K562 (cell line): ENCODE measurements at regions of chr7 and their contacts with region 1.

Region 1: GRCh38 chr7:116984917-116985316 is 31.6 kb downstream of the ST7 start:
- DNase-seq: peak; percentile 58 to 69 (median 66)
- ATAC-seq: peak; percentile 83
- H3K4me3 ChIP-seq: no peak overlapping the region
- H3K27ac ChIP-seq: no peak overlapping the region
- H3K4me1 ChIP-seq: no peaks in the 10 kb centered on the region; a peak in 1 of 5 replicates
- H3K27me3 ChIP-seq: no peaks in the 10 kb centered on the region
- CTCF ChIP-seq: peak; percentile 67 to 86 (median 71)
- EP300 ChIP-seq: no peak
- POLR2A ChIP-seq: no peak
- RAD21 ChIP-seq: peak; percentile 86 to 90

Region 2: GRCh38 chr7:116872026-116872425 is 112.9 kb before region 1 on chr7:
- CTCF ChIA-PET with region 1: no interaction called
- POLR2A ChIA-PET with region 1: no interaction called
- in situ Hi-C with region 1: no loop called
- intact Hi-C with region 1: no loop called
- DNase-seq: no peak
- ATAC-seq: no peak
- H3K4me3 ChIP-seq: no peak overlapping the region
- H3K27ac ChIP-seq: no peak overlapping the region
- H3K4me1 ChIP-seq: peaks cover 22 to 38% of the 10 kb centered on the region in 2 experiments
- H3K27me3 ChIP-seq: no peaks in the 10 kb centered on the region
- CTCF ChIP-seq: no peak
- EP300 ChIP-seq: no peak
- POLR2A ChIP-seq: no peak
- RAD21 ChIP-seq: no peak

Region 3: GRCh38 chr7:116970238-116970910 is 14.5 kb before region 1 on chr7:
- CTCF ChIA-PET with region 1: interaction called, 3 read pairs
- POLR2A ChIA-PET with region 1: interaction called, 10 read pairs
- in situ Hi-C with region 1: no loop called
- intact Hi-C with region 1: no loop called
- DNase-seq: peak in 1 of 4 experiments; percentile 37
- ATAC-seq: peak; percentile 48
- H3K4me3 ChIP-seq: no peak overlapping the region
- H3K27ac ChIP-seq: peak overlapping the region; percentile 50; the same call in 2 of the 3 replicates
- H3K4me1 ChIP-seq: peaks cover 12 to 25% of the 10 kb centered on the region in 2 experiments
- H3K27me3 ChIP-seq: no peaks in the 10 kb centered on the region
- CTCF ChIP-seq: no peak
- EP300 ChIP-seq: no peak
- POLR2A ChIP-seq: no peak
- RAD21 ChIP-seq: no peak

Region 4: GRCh38 chr7:117014673-117015133 is 29.8 kb after region 1 on chr7:
- CTCF ChIA-PET with region 1: interaction called, 10 read pairs
- POLR2A ChIA-PET with region 1: no interaction called
- in situ Hi-C with region 1: no loop called
- intact Hi-C with region 1: loop called (anchors 1 kb)
- DNase-seq: peak; percentile 79 to 97 (median 89)
- ATAC-seq: peak; percentile 88
- H3K4me3 ChIP-seq: peak overlapping the region; percentile 40
- H3K27ac ChIP-seq: peak overlapping the region; percentile 85
- H3K4me1 ChIP-seq: peaks cover 13 to 72% of the 10 kb centered on the region in 2 experiments
- H3K27me3 ChIP-seq: no peaks in the 10 kb centered on the region
- CTCF ChIP-seq: no peak
- EP300 ChIP-seq: peak; percentile 95
- POLR2A ChIP-seq: peak; percentile 81
- RAD21 ChIP-seq: peak in 1 of 2 experiments; percentile 17; a peak in 1 of 4 replicates

Region 5: GRCh38 chr7:117119192-117119924 is 134.4 kb after region 1 on chr7:
- CTCF ChIA-PET with region 1: interaction called, 143 read pairs
- POLR2A ChIA-PET with region 1: interaction called, 3 read pairs
- in situ Hi-C with region 1: no loop called
- intact Hi-C with region 1: loop called (anchors 1 kb)
- DNase-seq: peak; percentile 60 to 94 (median 66)
- ATAC-seq: peak; percentile 82
- H3K4me3 ChIP-seq: no peak overlapping the region
- H3K27ac ChIP-seq: no peak overlapping the region
- H3K4me1 ChIP-seq: peaks cover 0 to 8% of the 10 kb centered on the region in 2 experiments; a peak in 3 of 5 replicates
- H3K27me3 ChIP-seq: no peaks in the 10 kb centered on the region
- CTCF ChIP-seq: peak; percentile 90 to 98 (median 92)
- EP300 ChIP-seq: 0 out of 2 replicates have a peak, but pooled peaks have one; percentile 2
- POLR2A ChIP-seq: no peak
- RAD21 ChIP-seq: peak; percentile 99

Region 6: DNA sequence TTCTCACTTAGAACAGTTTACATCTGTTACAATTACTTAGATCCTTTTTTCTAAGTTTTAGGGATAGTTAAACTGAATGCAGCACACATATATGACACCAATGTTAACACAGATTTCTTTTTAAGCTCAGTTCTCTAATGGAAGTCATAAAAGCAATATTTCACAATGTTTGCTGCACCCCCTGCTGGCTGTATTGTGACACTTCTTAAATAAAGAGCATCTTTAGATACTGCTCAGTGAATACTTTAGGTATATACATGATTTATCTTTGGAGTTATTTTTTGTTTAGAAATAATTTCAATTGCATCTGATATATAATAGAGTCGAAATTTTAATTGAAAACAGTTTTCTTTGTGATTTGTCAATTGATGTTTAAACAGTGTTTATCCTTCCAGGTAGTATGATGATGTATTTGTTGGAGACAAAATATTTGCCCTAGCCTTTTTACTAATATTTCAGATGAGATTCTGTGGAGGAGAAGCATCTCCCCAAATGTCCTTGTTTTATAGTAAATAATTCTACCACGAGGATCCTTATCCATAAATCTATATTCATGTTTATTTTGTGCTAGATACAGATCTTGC is 142.8 kb after region 1 on chr7:
- CTCF ChIA-PET with region 1: interaction called, 143 read pairs
- POLR2A ChIA-PET with region 1: interaction called, 3 read pairs
- in situ Hi-C with region 1: loop called (anchors 5 kb)
- intact Hi-C with region 1: loop called (anchors 1 kb)
- DNase-seq: peak; percentile 34 to 80 (median 55)
- ATAC-seq: peak; percentile 79
- H3K4me3 ChIP-seq: no peak overlapping the region
- H3K27ac ChIP-seq: no peak overlapping the region
- H3K4me1 ChIP-seq: peaks cover 0 to 15% of the 10 kb centered on the region in 2 experiments; a peak in 3 of 5 replicates
- H3K27me3 ChIP-seq: no peaks in the 10 kb centered on the region
- CTCF ChIP-seq: peak; percentile 57 to 90 (median 70); a peak in 5 of 6 replicates
- EP300 ChIP-seq: no peak
- POLR2A ChIP-seq: no peak
- RAD21 ChIP-seq: peak; percentile 82 to 90

Region 7: GRCh38 chr7:117338020-117338419 is 353.1 kb after region 1 on chr7:
- CTCF ChIA-PET with region 1: no interaction called
- POLR2A ChIA-PET with region 1: no interaction called
- in situ Hi-C with region 1: no loop called
- intact Hi-C with region 1: no loop called
- DNase-seq: no peak
- ATAC-seq: peak; percentile 69
- H3K4me3 ChIP-seq: no peak overlapping the region
- H3K27ac ChIP-seq: no peak overlapping the region
- H3K4me1 ChIP-seq: no peaks in the 10 kb centered on the region
- H3K27me3 ChIP-seq: no peaks in the 10 kb centered on the region
- CTCF ChIP-seq: peak in 1 of 3 experiments; percentile 31; a peak in 1 of 6 replicates
- EP300 ChIP-seq: no peak
- POLR2A ChIP-seq: no peak
- RAD21 ChIP-seq: peak in 1 of 2 experiments; percentile 58; a peak in 3 of 4 replicates

Region 8: DNA sequence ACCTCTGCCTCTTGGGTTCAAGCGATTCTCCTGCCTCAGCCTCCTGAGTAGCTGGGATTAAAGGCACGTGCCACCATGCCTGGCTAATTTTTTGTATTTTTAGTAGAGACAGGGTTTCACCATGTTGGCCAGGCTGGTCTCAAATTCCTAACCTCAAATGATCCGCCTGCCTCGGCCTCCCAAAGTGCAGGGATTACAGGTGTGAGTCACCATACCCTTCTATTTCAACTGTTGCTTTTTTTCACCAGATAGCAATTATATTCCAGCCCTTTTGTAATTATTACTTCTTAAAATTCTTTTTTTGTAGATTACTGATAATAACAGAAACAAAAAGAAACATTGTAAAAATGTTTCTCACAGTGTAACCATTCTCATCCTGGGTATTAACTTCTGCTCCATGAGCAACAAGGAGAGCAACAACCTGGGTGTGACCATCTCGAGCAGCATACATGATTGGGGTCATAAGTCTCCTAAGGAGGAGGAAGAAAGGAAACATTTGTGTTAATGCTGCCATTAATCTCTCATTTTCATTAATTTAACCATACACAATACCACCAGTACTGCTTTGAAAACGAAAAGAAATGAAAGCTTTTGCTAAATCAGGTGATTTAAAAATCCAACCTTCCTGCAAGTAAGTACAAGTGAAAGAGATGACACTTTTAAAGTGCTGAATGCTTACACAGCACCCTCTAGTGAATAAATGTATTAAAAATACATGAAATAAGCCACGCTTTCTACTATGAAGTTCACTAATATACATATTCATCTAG is 400.6 kb after region 1 on chr7:
- CTCF ChIA-PET with region 1: no interaction called
- POLR2A ChIA-PET with region 1: no interaction called
- in situ Hi-C with region 1: no loop called
- intact Hi-C with region 1: loop called (anchors 5 kb)
- DNase-seq: no peak
- ATAC-seq: peak; percentile 78
- H3K4me3 ChIP-seq: no peak overlapping the region
- H3K27ac ChIP-seq: no peak overlapping the region
- H3K4me1 ChIP-seq: no peaks in the 10 kb centered on the region
- H3K27me3 ChIP-seq: no peaks in the 10 kb centered on the region
- CTCF ChIP-seq: peak in 2 of 3 experiments; percentile 19 to 53; a peak in 2 of 6 replicates
- EP300 ChIP-seq: no peak
- POLR2A ChIP-seq: no peak
- RAD21 ChIP-seq: peak; percentile 45 to 77; a peak in 3 of 4 replicates